ENCODE measurements at regions of chr2 and their contacts with region 1.

Region 1: DNA sequence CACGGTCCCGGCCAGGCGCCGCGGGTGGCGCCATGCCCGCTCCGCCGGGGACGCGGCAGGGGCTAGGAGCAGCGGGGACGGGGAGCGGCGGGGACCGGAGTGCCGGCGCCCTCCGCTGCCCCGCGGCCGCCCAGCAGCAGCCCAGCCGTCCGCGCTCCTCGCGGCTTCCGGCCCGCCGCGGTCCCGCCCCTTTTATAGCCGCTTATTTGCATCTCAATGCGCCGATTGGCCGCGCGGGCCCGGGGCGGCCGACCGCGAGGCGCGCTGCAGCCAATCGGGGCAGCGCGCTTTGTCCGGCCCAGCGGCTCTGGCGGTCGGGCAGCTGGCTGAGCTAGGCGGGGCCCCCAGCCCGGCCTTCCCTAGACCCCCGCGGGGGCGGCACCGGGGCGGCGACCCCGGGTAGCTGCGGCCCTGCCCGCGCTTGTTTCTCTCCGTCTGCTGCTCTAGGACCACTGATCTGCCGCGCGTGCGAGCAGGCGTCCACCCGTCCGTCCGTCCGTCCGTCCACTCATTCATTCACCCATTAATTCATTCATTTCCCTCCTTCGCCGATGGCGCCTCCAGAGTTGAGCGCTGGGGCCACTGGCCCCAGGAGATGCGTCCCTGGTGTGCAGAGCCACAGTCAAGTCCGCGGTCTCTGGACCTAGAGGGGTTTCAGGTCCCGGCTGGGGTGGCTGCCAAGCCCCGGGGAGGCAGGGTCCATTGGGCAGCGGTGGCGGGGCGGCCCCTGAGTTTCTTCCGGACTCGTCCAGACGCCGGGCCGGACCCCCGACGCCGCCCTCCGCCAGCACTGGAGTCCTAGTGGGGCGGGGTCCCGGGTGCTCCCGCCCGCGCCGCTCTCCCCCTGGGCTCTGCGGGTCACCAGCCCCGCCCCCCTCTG is at the start of gene HES6:
- DNase-seq: peak; percentile 92 to 94
- H3K4me3 ChIP-seq: peak within 1 kb of the TSS in 2 of 3 donors; percentile 47 to 66
- H3K27ac ChIP-seq: no peak within 1 kb of the TSS
- H3K4me1 ChIP-seq: peaks cover 10 to 17% of the 10 kb centered on the region in 2 donors
- H3K27me3 ChIP-seq: no peaks in the 10 kb centered on the region
- CTCF ChIP-seq: peak in 2 of 6 experiments; percentile 20 to 21
- POLR2A ChIP-seq: peak in 1 of 2 donors; percentile 95
- total RNA-seq, gene HES6: 2.9 to 9.0 (median 6.8) TPM

Region 2: DNA sequence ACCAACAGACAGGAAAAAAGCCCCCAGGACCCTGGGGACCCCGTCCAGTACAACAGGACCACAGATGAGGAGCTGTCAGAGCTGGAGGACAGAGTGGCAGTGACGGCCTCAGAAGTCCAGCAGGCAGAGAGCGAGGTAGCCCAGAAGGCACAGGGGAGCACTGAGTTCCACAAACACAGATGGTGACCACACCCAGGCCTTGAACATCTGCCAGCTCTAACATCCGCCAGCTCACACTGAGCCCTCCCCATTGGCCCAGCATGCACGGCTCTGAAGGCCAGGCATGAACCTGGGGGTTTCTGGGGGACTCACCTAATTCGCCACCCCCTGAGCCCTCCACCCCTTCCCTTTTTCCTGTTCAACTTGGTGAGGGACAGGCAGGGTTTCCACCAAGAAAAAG is 699.3 kb before region 1 on chr2:
- intact Hi-C with region 1: no loop called
- DNase-seq: peak in 1 of 2 donors; percentile 21
- H3K4me3 ChIP-seq: no peak overlapping the region
- H3K27ac ChIP-seq: no peak overlapping the region
- H3K4me1 ChIP-seq: no peaks in the 10 kb centered on the region
- H3K27me3 ChIP-seq: no peaks in the 10 kb centered on the region
- CTCF ChIP-seq: no peak
- POLR2A ChIP-seq: no peak

Region 3: GRCh38 chr2:238060542-238061314 is 179.4 kb before region 1 on chr2 and contains the start of gene SCLY:
- intact Hi-C with region 1: loop called (anchors 10 kb)
- DNase-seq: peak; percentile 98
- H3K4me3 ChIP-seq: peak within 1 kb of the TSS; percentile 68 to 91 (median 76)
- H3K27ac ChIP-seq: peak within 1 kb of the TSS; percentile 65 to 87 (median 85)
- H3K4me1 ChIP-seq: peaks cover 10 to 12% of the 10 kb centered on the region in 2 donors
- H3K27me3 ChIP-seq: no peaks in the 10 kb centered on the region
- CTCF ChIP-seq: no peak
- POLR2A ChIP-seq: peak in 1 of 2 donors; percentile 87
- total RNA-seq, gene SCLY: 21.8 to 48.2 (median 31.0) TPM

Measured in thyroid gland (tissue), 4 donors.